Activated CD8-positive, alpha-beta T cell treated with anti-CD3 and anti-CD28 coated beads for 36 hours (primary cell): ENCODE measurements at regions of chr1 and their contacts with region 1.

Region 1: GRCh38 chr1:40849801-40850592 is 12.2 kb downstream of the CITED4 start:
- DNase-seq: peak; percentile 85
- ATAC-seq: peak; percentile 92
- H3K4me3 Mint-ChIP-seq: peak overlapping the region; percentile 22
- H3K27ac Mint-ChIP-seq: peak overlapping the region; percentile 49
- H3K4me1 Mint-ChIP-seq: peaks cover 12% of the 10 kb centered on the region
- H3K27me3 Mint-ChIP-seq: no peaks in the 10 kb centered on the region
- CTCF ChIP-seq: peak; percentile 86

Region 2: GRCh38 chr1:40612345-40612831 is 237.6 kb before region 1 on chr1:
- CTCF ChIA-PET with region 1: interaction called, 6 read pairs
- POLR2A ChIA-PET with region 1: no interaction called
- intact Hi-C with region 1: loop called (anchors 5 kb)
- DNase-seq: peak; percentile 82
- ATAC-seq: peak; percentile 97
- H3K4me3 Mint-ChIP-seq: no peak overlapping the region
- H3K27ac Mint-ChIP-seq: no peak overlapping the region
- H3K4me1 Mint-ChIP-seq: no peaks in the 10 kb centered on the region
- H3K27me3 Mint-ChIP-seq: no peaks in the 10 kb centered on the region
- CTCF ChIP-seq: peak; percentile 86

Region 3: DNA sequence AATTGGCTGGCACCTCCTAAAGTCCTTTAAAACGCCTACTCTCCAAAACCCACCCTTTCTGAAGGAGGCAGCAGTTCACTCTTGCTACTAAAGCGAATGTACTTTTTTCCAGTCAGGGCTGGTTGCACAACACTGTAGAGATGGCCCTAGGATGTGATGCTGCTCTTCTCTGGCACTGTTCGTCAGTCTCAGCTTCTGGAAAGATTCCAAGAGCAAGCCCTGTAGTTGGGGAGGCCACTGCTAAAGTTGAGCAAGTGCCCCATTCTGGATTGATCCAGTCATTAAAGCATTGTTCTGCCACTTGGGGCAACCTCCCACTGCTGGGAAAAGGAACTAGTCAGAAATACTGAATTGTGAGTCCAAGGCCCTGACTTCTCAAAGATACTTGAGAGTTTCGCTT is 94.9 kb before region 1 on chr1:
- CTCF ChIA-PET with region 1: interaction called, 16 read pairs
- POLR2A ChIA-PET with region 1: interaction called, 3 read pairs
- intact Hi-C with region 1: no loop called
- DNase-seq: no peak
- ATAC-seq: no peak
- H3K4me3 Mint-ChIP-seq: no peak overlapping the region
- H3K27ac Mint-ChIP-seq: no peak overlapping the region
- H3K4me1 Mint-ChIP-seq: peaks cover 30% of the 10 kb centered on the region
- H3K27me3 Mint-ChIP-seq: no peaks in the 10 kb centered on the region
- CTCF ChIP-seq: no peak

Region 4: DNA sequence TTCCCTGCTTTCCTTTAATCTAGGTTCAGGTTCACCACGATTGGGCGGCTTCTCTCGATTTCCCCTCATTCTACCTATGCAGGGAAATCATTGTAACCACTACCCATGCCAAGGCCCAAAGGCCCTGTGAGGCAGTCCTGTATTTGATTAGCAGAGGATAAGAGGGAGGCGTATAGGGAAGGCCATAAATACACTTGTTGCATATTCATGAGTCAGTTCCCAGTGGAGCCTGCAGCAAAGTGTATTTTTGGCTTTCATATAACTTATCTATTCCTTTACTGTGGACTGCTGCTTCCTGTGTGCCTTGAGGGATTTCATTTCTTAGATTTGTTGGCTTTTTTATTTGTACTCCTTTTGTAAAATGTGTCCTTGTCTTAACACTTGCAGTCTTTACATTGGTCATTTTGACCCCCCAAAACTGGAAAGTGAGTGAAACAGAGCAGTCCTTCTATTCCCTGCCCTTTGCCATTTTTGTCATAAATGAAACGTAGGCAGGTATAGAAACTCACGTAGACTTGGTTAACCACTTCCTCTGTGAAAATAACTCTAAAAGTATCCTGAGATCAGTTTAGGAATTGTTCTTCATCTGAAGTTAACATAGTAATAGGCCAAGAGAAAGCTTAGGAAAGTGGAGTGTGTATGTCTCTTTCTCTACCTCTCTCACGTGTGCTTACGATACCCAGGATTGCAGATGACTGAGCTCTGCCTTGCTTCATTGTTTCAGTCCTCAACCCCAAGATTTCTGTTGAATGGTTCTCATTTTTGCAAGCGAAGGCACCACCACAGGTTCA is 86.1 kb before region 1 on chr1:
- CTCF ChIA-PET with region 1: interaction called, 21 read pairs
- POLR2A ChIA-PET with region 1: no interaction called
- intact Hi-C with region 1: no loop called
- DNase-seq: peak; percentile 17
- ATAC-seq: peak; percentile 73
- H3K4me3 Mint-ChIP-seq: peak overlapping the region; percentile 51
- H3K27ac Mint-ChIP-seq: peak overlapping the region; percentile 96
- H3K4me1 Mint-ChIP-seq: peaks cover 40% of the 10 kb centered on the region
- H3K27me3 Mint-ChIP-seq: no peaks in the 10 kb centered on the region
- CTCF ChIP-seq: no peak

Region 5: GRCh38 chr1:40783001-40783905 is 66.7 kb before region 1 on chr1 and contains the start of gene KCNQ4:
- CTCF ChIA-PET with region 1: interaction called, 169 read pairs
- POLR2A ChIA-PET with region 1: no interaction called
- intact Hi-C with region 1: no loop called
- DNase-seq: peak; percentile 25
- ATAC-seq: peak; percentile 51
- H3K4me3 Mint-ChIP-seq: peak within 1 kb of the TSS; percentile 62
- H3K27ac Mint-ChIP-seq: peak within 1 kb of the TSS; percentile 3
- H3K4me1 Mint-ChIP-seq: peaks cover 7% of the 10 kb centered on the region
- H3K27me3 Mint-ChIP-seq: peaks cover 26% of the 10 kb centered on the region
- CTCF ChIP-seq: no peak
- total RNA-seq, gene KCNQ4: 0.38 to 0.43 TPM

Region 6: DNA sequence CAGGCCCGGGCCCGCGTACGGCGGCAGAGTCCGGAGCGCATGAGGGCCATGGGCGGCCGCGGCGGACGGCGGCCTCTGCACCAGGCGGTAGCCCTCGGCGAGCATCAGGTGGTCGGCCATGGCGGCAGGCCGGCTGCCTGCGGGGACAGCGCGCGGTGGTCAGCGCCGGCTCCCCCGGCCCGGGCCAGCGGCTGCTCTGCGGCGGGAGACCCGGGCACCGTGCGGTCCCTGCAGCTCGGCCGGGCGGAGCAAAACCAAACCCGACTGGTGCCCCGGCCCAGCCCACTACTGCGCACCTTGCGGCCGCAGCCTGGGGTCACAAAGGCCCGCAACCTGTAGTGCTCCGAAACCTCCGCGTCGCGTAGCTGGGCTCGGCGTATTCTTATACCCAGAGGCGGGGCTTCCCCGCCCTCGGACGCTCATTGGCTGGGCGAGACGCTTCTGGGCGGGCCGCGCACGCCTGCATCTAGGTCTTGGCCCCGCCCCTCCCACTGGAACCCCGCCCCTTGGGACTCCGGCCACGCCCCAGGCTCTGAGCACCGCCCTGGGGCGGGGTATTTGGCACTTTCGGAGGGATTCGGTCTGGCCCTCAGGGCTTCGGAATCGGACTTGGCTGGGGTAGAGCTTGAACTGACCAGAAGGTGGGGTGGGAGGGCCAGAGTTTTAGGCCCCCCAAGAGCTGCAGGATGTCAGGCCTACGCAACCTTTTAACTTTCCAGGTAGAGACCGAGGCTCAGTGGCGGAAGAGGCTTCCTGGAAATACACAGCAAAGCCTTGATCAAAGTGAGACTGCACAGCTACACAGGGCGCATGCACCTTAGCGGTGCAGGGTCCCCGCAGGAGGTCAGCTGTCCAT is 12.2 kb after region 1 on chr1 and contains the start of gene CITED4:
- CTCF ChIA-PET with region 1: interaction called, 42 read pairs
- POLR2A ChIA-PET with region 1: interaction called, 6 read pairs
- intact Hi-C with region 1: no loop called
- DNase-seq: peak; percentile 96
- ATAC-seq: peak; percentile 95
- H3K4me3 Mint-ChIP-seq: peak within 1 kb of the TSS; percentile 77
- H3K27ac Mint-ChIP-seq: peak within 1 kb of the TSS; percentile 96
- H3K4me1 Mint-ChIP-seq: peaks cover 16% of the 10 kb centered on the region
- H3K27me3 Mint-ChIP-seq: peaks cover 3% of the 10 kb centered on the region
- CTCF ChIP-seq: no peak
- total RNA-seq, gene CITED4: 6.7 to 7.4 TPM